WTC11 (cell line): ENCODE measurements at regions of chr20 and their contacts with region 1.

Region 1: DNA sequence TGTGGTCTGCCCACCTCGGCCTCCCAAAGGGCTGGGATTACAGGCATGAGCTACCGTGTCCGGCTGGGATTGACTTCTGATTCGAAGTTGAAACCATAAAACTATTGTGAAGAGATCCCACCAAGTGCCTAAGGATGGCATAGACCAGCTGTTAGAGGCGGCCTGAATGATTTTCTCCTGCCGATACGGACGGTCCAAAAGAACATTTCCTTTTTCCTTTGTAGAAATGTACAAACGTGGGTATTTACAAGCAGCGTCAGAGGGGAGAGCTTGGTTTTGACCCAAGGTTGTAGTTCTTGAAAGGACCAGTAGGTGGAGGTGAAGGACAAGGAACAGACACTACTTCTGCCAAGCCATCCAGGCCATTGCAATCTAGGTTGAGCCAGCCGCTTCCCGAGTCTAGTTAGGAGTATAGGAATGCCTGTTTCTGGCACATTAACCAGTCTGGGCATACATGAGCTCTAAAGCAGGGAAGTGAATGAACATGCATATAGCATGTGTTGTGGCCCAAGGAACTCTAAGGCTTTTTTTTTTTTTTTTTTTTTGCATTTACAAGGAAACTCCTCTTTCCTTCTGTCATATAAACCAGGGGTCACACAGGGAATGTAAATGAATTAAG is 29.1 kb downstream of the MOCS3 start:
- DNase-seq: peak; percentile 69
- ATAC-seq: peak; percentile 70
- H3K4me3 Mint-ChIP-seq: no peak overlapping the region; the same call in 1 of the 2 replicates
- H3K27ac Mint-ChIP-seq: 0 out of 2 replicates have a peak overlapping the region, but pooled peaks have one; percentile 26
- H3K4me1 Mint-ChIP-seq: peaks cover 39% of the 10 kb centered on the region
- H3K27me3 Mint-ChIP-seq: no peaks in the 10 kb centered on the region; the same call in 1 of the 2 replicates
- CTCF ChIP-seq: peak; percentile 83

Region 2: DNA sequence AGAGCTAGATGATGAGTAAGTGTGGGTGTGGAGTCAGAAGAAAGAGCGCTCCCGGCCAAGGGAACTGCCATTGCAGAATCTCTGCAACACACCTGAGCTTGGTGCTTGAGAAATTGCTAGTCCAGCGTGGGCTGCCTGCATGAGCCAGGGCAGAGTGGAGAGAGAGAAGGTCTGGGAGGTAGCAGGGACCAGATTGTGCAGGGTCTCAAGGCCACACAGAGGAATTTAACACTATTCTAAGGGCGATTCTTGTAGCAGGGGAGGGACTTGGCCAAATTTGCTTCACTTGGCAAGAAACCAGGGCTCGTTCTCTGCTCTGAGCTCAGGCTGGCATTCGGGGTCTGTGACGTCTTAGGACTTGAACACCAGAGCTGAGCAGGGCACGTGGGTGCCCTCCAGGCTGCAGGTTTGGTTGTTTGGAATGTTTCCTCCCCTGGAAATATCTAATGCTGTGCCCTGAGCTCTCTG is 139.3 kb before region 1 on chr20:
- CTCF ChIA-PET with region 1: no interaction called
- POLR2A ChIA-PET with region 1: no interaction called
- DNase-seq: no peak
- ATAC-seq: no peak
- H3K4me3 Mint-ChIP-seq: no peak overlapping the region
- H3K27ac Mint-ChIP-seq: peak overlapping the region; percentile 83
- H3K4me1 Mint-ChIP-seq: peaks cover 30% of the 10 kb centered on the region
- H3K27me3 Mint-ChIP-seq: no peaks in the 10 kb centered on the region
- CTCF ChIP-seq: no peak

Region 3: DNA sequence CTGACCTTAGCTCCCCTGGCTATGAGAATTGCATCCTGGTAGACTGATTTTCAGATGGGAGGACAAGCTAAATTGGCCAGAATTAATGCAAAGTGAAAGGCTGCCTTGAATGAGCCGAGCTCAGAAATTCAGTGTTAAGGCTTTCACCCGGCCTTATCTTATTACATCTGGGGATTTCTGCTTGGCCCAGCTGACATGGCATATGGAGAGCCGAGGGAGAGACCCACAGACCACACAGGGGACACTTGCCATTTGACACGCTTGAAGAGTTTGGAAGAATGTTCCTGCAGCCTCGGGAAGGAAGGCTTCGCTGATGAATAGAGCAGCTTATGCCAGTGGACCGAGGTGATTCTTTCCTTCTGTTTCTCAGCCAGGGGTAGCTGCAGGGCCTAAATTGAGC is 20.1 kb before region 1 on chr20:
- CTCF ChIA-PET with region 1: interaction called, 16 read pairs
- POLR2A ChIA-PET with region 1: no interaction called
- DNase-seq: no peak
- ATAC-seq: no peak
- H3K4me3 Mint-ChIP-seq: no peak overlapping the region
- H3K27ac Mint-ChIP-seq: no peak overlapping the region
- H3K4me1 Mint-ChIP-seq: peaks cover 11% of the 10 kb centered on the region; the same call in 1 of the 2 replicates
- H3K27me3 Mint-ChIP-seq: 0 out of 2 replicates have a peak, but pooled peaks cover 3% of the 10 kb centered on the region
- CTCF ChIP-seq: no peak

Region 4: GRCh38 chr20:51091406-51092195 is 103.9 kb after region 1 on chr20:
- CTCF ChIA-PET with region 1: interaction called, 28 read pairs
- POLR2A ChIA-PET with region 1: interaction called, 4 read pairs
- DNase-seq: no peak
- ATAC-seq: peak; percentile 63
- H3K4me3 Mint-ChIP-seq: peak overlapping the region; percentile 41
- H3K27ac Mint-ChIP-seq: peak overlapping the region; percentile 48
- H3K4me1 Mint-ChIP-seq: peaks cover 39% of the 10 kb centered on the region
- H3K27me3 Mint-ChIP-seq: no peaks in the 10 kb centered on the region
- CTCF ChIP-seq: no peak

Region 5: DNA sequence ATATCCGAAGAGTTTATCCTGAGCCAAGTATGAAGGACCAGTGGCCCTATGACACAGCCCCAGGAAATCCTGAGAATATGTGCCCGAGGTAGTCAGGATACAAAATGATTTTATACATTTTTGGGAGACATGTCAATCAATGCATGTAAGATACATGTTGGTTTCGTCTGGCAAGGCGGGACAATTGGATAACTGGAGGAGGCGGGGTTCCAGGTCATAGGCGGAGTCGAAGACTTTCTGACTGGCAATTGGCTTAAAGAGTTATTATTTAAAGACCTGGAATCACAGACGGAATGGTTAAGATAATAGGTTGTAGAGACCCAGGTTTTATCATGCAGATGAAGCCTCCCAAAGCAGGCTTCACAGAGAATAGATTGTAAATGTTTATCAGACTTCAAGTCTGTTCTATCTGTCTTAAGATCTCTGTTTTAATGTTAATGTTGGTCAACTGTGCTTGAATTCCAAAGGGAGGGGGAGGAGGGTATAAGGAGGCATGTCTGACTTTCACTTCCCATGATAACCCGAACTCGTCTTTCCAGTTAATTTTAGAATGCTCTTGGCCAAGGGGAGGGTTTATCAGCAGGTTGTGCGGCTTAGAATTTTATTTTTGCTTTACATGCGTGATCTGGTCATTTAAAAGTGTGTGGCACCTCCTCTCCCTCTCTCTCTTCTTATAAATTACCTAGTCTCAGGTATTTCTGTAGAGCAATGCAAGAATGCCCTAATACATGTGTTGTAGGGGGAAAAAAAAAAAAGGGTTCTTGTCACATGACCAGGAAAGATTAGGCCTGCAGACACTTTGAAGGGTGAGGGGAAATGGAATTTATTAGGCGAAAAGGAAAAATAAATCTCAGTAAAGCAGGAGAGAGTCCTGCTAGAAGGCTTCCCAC is 324.1 kb after region 1 on chr20:
- CTCF ChIA-PET with region 1: interaction called, 246 read pairs
- POLR2A ChIA-PET with region 1: interaction called, 3 read pairs
- DNase-seq: peak; percentile 49
- ATAC-seq: peak; percentile 84
- H3K4me3 Mint-ChIP-seq: peak overlapping the region; percentile 48
- H3K27ac Mint-ChIP-seq: peak overlapping the region; percentile 80
- H3K4me1 Mint-ChIP-seq: peaks cover 51% of the 10 kb centered on the region
- H3K27me3 Mint-ChIP-seq: peaks cover 66% of the 10 kb centered on the region
- CTCF ChIP-seq: no peak

Region 6: GRCh38 chr20:51331481-51331880 is 343.8 kb after region 1 on chr20:
- CTCF ChIA-PET with region 1: interaction called, 211 read pairs
- POLR2A ChIA-PET with region 1: interaction called, 4 read pairs
- DNase-seq: no peak
- ATAC-seq: no peak
- H3K4me3 Mint-ChIP-seq: no peak overlapping the region
- H3K27ac Mint-ChIP-seq: no peak overlapping the region
- H3K4me1 Mint-ChIP-seq: no peaks in the 10 kb centered on the region
- H3K27me3 Mint-ChIP-seq: no peaks in the 10 kb centered on the region; the same call in 1 of the 2 replicates
- CTCF ChIP-seq: no peak

Region 7: DNA sequence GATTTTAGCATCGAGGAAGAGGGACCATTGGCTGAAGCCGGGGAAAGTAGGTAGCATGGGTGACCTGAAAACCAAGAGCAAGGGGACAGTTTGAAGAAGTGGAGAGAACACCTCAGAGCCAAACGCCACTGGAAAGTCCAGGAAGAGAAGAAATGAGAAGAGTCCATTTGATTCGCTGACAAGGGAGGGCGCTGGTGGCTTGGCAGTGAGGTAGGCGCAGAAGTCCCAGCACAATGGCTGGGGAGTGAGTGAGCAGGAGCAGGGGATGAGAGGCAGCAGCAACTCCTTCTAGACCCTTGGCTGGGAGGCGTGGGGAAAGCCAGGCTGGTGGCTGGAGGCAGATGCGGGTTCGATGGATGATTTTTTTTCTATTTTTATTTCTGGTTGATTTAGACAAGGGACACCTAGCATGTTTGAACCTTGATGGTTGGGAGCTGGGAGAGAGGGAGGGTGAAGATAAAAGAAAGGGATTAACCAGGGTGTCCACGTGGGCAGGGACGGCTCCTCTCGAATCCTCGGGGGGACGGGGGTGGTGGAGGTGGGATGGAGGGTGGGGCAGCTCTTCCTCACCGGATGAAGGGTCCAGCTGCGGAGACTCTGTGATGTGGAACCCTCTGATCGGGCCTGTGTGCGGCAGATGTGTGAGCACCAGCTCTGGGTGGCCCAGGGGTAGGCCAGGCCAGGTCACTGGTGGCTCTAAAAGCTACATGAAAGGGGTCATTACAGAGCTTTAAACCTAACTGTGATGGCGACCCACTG is 390.6 kb after region 1 on chr20:
- CTCF ChIA-PET with region 1: interaction called, 24 read pairs
- POLR2A ChIA-PET with region 1: no interaction called
- DNase-seq: peak; percentile 61
- ATAC-seq: peak; percentile 85
- H3K4me3 Mint-ChIP-seq: no peak overlapping the region
- H3K27ac Mint-ChIP-seq: no peak overlapping the region; the same call in 1 of the 2 replicates
- H3K4me1 Mint-ChIP-seq: peaks cover 8% of the 10 kb centered on the region
- H3K27me3 Mint-ChIP-seq: no peaks in the 10 kb centered on the region
- CTCF ChIP-seq: no peak

Region 8: DNA sequence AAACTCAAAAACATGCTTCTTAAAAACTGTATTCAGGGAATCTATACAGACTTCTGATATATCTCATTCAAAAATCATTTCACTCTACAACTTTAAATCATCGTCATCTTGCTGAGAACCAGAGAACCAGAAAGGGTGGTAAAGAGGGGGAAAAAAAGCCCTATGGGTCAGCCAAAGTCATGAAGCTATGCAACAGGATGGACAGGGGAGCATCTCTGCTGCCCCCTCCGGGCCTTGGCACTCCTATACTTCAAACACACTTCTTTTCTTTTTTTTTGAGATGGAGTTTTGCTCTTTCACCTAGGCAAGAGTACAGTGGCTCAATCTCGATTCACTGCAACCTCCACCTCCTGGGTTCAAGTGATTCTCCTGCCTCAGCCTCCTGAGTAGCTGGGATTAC is 628.4 kb after region 1 on chr20:
- CTCF ChIA-PET with region 1: interaction called, 13 read pairs
- POLR2A ChIA-PET with region 1: no interaction called
- DNase-seq: no peak
- ATAC-seq: peak; percentile 59
- H3K4me3 Mint-ChIP-seq: no peak overlapping the region
- H3K27ac Mint-ChIP-seq: no peak overlapping the region
- H3K4me1 Mint-ChIP-seq: 0 out of 2 replicates have a peak, but pooled peaks cover 2% of the 10 kb centered on the region
- H3K27me3 Mint-ChIP-seq: no peaks in the 10 kb centered on the region
- CTCF ChIP-seq: no peak